Transverse colon (tissue), 4 donors: ENCODE measurements at regions of chr11 and their contacts with region 1.

Region 1: DNA sequence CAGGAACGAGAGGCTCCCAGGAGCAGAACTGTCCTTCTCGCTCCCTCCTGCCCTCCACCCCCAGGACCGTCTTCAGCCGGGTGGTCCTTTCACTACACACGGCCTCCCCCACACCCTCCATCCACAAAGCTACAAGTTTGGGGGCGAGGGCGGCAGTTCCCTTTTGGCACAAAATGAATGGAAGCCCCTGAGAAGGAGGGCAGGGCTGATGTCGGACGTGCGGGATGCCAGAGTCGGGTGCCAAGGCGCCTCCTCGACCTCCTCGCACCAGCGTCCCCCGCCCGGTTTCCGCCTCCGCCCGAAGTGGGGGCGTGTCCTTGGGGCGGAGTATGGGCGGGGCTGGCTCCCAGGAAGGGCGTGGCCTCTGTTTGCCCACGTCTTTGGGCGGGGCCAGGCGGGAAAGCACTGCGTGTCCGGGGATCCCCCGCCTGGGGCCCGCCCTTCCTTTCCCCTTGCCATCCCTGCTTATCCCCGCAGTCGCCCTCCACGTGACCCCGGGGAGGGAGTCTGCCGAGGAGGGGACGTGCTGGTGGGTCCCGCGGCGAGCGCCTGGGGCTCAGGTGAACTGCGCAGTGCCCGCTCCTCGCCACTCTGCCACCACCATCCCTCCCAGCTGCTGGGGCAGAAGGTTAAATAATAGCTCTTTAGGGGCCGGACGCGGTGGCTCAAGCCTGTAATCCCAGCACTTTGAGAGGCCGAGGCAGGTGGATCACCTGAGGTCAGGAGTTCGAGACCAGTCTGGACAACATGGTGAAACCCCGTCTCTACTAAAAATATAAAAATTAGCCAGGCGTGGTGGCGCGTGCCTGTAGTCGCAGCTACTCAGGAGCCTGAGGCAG is 937 bp upstream of the EFEMP2 start:
- DNase-seq: peak; percentile 97
- H3K4me3 ChIP-seq: peak overlapping the region; percentile 36 to 63 (median 50)
- H3K27ac ChIP-seq: peak overlapping the region; percentile 88 to 92 (median 90)
- H3K4me1 ChIP-seq: peaks cover 9 to 37% (median 20%) of the 10 kb centered on the region in 4 donors
- H3K27me3 ChIP-seq: no peaks in the 10 kb centered on the region
- CTCF ChIP-seq: no peak
- EP300 ChIP-seq: peak; percentile 40
- POLR2A ChIP-seq: peak; percentile 81

Region 2: GRCh38 chr11:65859200-65859811 is 14.2 kb before region 1 on chr11:
- in situ Hi-C with region 1: no loop called
- intact Hi-C with region 1: loop called (anchors 2 kb)
- DNase-seq: peak; percentile 99
- H3K4me3 ChIP-seq: peak overlapping the region; percentile 65 to 97 (median 88)
- H3K27ac ChIP-seq: peak overlapping the region; percentile 97 to 100 (median 100)
- H3K4me1 ChIP-seq: peaks cover 32 to 57% (median 48%) of the 10 kb centered on the region in 4 donors
- H3K27me3 ChIP-seq: no peaks in the 10 kb centered on the region
- CTCF ChIP-seq: peak in 3 of 5 experiments; percentile 9 to 35 (median 25)
- EP300 ChIP-seq: no peak
- POLR2A ChIP-seq: peak; percentile 90

Region 3: DNA sequence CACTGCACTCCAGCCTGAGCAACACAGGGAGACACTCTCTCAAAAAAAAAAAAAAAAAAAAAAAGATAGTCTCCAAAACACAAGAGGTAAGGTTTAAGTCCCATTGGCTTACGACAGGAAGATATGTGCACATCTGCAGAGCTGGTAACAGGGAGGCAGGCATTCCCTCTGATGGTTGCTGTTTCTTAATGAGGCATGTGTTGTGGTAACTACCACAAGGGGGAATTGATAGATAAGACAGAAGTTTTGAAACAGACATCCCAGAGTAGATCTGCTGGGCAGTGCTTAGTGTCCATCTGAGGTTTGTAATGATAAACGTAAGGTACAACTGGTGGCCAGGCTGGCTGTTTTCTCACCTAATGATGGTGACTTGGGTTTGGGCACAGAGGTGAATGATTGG is 123.7 kb after region 1 on chr11:
- in situ Hi-C with region 1: loop called in 3 of 4 experiments (anchors 10 to 25 kb)
- intact Hi-C with region 1: no loop called
- DNase-seq: no peak
- H3K4me3 ChIP-seq: no peak overlapping the region
- H3K27ac ChIP-seq: no peak overlapping the region
- H3K4me1 ChIP-seq: peaks cover 3 to 23% (median 10%) of the 10 kb centered on the region in 4 donors
- H3K27me3 ChIP-seq: no peaks in the 10 kb centered on the region
- CTCF ChIP-seq: no peak
- EP300 ChIP-seq: no peak
- POLR2A ChIP-seq: no peak